GM13976 (cell line): ENCODE measurements at regions of chr19 and their contacts with region 1.

Region 1: DNA sequence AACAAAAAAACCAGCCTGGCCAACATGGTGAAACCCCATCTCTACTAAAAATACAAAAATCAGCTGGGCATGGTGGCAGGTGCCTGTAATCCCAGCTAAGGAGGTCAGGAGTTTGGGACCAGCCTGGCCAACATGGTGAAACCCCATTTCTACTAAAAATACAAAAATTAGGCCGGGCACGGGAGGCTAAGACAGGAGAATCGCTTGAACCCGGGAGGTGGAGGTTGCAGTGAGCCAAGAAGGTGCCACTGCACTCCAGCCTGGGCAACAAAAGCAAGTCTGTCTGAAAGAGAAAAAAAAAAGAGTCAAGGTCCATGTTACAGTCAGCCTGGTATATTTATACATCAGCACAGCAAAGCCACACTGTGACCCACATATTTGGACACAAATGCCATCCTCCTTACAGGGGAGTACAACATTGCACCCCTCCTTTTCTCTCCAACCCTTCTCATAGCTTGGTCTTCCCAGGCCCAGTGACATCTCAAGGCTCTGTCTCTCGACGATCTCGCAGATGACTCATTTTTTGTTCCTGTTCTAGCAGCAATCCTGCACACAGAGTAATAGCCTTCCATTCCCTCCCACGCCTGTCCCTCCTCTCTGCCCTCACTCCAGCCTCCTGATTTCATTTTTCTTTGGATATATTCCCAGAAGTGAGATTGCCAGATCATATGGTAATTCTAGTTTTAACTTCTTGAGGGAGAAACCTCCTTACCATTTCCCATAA is 21.0 kb upstream of the DPP9 start:
- DNase-seq: no peak
- CTCF ChIP-seq: no peak

Region 2: GRCh38 chr19:4781801-4782200 is 37.2 kb after region 1 on chr19:
- in situ Hi-C with region 1: loop called (anchors 5 kb)
- DNase-seq: no peak
- CTCF ChIP-seq: no peak